Activated T-helper 1 cell treated with anti-CD3 and anti-CD28 coated beads, Interleukin-12 subunit alpha, Interleukin-12 subunit beta, Interleukin-2, Interleukin-4 antibody, amounts not matched to agents 30 ng/mL and 10 ng/mL and 1 ng/mL, durations not matched to agents 14 hours and 24 hours and 36 hours (primary cell): ENCODE measurements at regions of chr2 and their contacts with region 1.

Region 1: DNA sequence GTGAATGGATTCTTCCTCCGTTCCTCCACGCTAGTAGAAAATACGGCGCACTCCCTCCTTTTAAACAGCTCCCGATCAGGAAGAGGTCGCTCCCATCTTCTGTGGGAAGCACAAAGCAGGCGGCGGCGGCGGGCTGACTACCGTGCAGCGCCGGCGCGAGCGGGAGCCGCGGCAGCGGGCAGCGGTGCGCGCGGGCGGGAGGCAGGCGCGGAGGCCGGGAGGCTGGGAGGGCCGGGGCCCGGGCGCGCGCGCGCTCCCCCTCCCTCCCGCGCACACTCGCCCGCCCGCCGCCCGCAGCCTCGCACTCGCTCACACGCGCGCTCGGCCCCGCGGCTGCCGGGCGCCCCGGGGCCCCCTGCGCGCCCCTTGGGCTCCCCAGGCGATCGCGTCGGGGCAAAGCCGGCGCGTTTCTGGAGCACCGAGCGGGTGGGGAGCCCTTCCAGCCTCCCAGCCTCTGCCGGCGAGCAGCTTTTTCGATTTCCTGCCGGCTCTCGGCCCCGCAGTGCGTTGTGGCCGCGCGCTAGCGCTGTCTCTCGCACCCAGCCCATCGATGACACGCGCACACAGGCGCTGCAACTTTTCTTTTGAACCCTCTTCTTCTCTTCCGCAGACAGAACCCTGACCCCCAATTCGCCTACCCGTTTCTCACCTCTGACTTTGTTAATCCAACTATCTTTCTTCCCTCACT is at the start of gene SLC8A1:
- DNase-seq: peak; percentile 3
- H3K4me3 Mint-ChIP-seq: peak within 1 kb of the TSS; percentile 86
- H3K27ac Mint-ChIP-seq: peak within 1 kb of the TSS; percentile 62
- H3K4me1 Mint-ChIP-seq: peaks cover 29% of the 10 kb centered on the region
- H3K27me3 Mint-ChIP-seq: peaks cover 29% of the 10 kb centered on the region
- total RNA-seq, gene SLC8A1: 1.8 and 2.9 TPM in 2 replicates

Region 2: GRCh38 chr2:40169430-40169829 is 282.6 kb before region 1 on chr2:
- intact Hi-C with region 1: no loop called
- DNase-seq: no peak
- H3K4me3 Mint-ChIP-seq: no peak overlapping the region
- H3K27ac Mint-ChIP-seq: no peak overlapping the region
- H3K4me1 Mint-ChIP-seq: no peaks in the 10 kb centered on the region
- H3K27me3 Mint-ChIP-seq: no peaks in the 10 kb centered on the region

Region 3: DNA sequence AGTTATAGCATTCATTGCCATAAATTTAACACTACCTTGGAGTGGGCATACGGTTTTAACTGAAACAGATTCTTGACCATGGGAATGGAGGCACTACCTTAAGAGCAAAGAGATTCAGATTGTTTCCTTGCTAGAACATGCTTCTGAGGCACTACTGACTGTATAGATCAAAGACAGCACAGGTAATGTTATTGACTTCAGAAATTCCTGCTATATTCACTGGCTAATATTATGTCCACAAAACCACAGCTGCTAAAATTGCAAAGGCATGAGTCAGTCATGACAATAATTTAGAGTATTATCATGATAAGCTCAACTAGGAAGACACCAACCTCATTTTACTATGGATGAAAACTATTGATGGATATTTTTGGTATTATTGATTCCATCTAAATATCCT is 39.6 kb before region 1 on chr2:
- intact Hi-C with region 1: no loop called
- DNase-seq: no peak
- H3K4me3 Mint-ChIP-seq: no peak overlapping the region
- H3K27ac Mint-ChIP-seq: no peak overlapping the region
- H3K4me1 Mint-ChIP-seq: no peaks in the 10 kb centered on the region
- H3K27me3 Mint-ChIP-seq: no peaks in the 10 kb centered on the region

Region 4: DNA sequence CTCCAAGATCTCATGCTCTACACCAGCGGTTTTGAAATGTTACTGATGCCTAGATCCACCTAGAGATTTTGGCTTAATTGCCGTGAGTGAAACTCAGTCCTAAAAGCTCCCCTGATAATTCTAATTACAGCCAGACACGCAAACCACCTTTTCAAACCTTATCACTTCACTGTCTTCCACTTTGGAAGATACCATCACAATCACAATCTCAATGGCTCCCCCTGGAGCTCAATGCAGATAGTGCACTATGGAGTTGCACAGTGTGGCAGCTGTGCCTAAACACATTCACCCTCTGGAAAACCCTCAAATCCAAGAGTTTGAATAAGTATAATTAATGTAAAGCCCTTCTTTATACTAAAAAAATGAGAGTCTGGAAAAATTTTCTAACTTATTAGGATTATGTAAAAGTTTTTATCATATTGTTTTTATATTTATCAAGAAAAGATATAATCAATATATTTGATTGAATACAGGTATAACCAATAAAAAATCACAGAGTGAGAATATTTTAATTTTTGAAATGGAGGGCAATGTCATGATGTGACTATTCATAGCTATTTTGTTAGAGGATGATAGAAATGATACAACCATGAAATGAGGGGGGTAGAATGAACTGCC is 102.7 kb after region 1 on chr2:
- intact Hi-C with region 1: loop called (anchors 2 kb)
- DNase-seq: peak; percentile 26
- H3K4me3 Mint-ChIP-seq: no peak overlapping the region
- H3K27ac Mint-ChIP-seq: no peak overlapping the region
- H3K4me1 Mint-ChIP-seq: no peaks in the 10 kb centered on the region
- H3K27me3 Mint-ChIP-seq: peaks cover 2% of the 10 kb centered on the region